ENCODE measurements at regions of chr3 and their contacts with region 1.

Region 1: DNA sequence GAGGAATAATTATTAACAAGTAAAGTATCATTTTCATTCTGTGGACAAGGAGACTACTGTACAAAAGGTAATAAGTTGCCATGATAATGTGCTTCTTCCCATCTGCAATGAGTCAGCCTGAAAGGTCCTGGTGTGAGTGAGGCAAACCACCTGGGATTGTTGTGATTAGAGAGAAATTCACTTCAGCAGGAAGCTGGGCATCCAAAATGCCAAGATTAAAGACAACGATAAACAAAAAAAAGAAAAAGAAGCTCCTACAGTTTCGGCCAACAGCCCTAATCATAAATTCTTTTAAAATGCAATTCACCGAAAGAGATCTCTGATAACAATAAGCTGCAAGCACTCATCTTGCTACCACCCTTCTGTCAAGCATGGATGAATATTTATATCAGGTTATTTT is 507.8 kb downstream of the TUSC7 start:
- DNase-seq: no peak
- ATAC-seq: no peak
- H3K4me3 Mint-ChIP-seq: no peak overlapping the region
- H3K27ac Mint-ChIP-seq: no peak overlapping the region
- H3K4me1 Mint-ChIP-seq: no peaks in the 10 kb centered on the region
- H3K27me3 Mint-ChIP-seq: no peaks in the 10 kb centered on the region

Region 2: DNA sequence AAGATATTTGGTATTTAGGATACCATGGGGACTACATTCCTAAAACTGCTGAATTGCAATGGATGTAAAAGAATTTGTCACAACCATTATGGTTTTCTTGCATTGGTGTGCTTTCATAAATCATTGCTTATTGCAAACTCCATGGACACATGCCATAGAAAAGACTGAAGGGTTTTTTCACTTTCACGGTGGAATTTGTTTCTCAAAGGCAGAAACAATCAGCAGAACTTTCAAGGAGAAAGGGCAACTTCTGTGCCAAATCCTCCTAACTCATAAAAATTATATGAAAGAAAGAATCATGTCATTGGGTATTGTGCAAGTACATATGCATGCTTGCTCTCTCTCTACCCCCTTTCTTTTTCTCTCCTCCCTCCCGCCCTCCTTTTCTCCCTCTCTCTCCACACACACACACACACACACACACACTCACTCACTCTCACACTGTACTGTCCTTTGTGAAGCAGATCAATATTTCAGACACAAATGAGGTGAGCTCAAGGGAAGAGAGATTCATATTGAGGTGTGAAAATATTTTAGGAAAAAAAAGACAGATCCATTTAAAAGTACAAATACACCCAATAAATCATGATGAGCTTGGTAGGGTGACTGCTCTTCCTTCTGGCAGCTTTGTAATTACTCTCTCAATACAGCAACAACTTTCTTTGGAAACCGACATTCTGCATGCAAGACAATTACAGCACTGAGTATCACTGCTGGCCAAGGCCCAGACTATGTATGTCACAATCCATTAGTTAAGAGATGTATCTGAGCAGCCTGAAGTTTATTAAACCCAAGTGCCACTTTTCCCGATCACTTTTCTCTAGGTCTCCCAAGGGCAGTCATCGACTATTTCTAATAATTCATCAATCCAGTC is 15.2 kb before region 1 on chr3:
- CTCF ChIA-PET with region 1: no interaction called
- POLR2A ChIA-PET with region 1: no interaction called
- intact Hi-C with region 1: no loop called
- DNase-seq: no peak
- ATAC-seq: no peak
- H3K4me3 Mint-ChIP-seq: no peak overlapping the region
- H3K27ac Mint-ChIP-seq: no peak overlapping the region
- H3K4me1 Mint-ChIP-seq: no peaks in the 10 kb centered on the region
- H3K27me3 Mint-ChIP-seq: no peaks in the 10 kb centered on the region

Region 3: DNA sequence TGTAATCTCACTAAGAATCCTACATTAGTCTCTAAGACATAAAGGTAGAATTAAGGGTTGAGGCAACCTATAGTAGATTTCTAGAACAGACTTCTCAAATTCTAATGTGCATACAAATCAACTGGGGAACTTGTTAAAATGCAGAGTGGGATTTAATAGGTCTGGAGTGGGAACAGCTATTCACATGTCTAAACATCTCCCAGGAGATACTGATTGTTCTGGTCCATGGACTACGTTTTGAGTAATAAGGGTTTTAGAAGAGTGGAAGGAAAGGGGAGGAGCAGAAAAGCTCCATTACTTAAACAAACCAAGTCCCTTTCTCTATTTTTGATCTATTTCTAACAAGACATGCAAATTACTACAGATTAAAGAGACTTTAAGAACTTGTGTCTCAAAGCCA is 17.0 kb after region 1 on chr3:
- CTCF ChIA-PET with region 1: no interaction called
- POLR2A ChIA-PET with region 1: interaction called, 11 read pairs
- intact Hi-C with region 1: no loop called
- DNase-seq: no peak
- ATAC-seq: no peak
- H3K4me3 Mint-ChIP-seq: no peak overlapping the region
- H3K27ac Mint-ChIP-seq: no peak overlapping the region
- H3K4me1 Mint-ChIP-seq: no peaks in the 10 kb centered on the region
- H3K27me3 Mint-ChIP-seq: no peaks in the 10 kb centered on the region

Region 4: GRCh38 chr3:117589454-117589853 is 372.1 kb after region 1 on chr3:
- CTCF ChIA-PET with region 1: no interaction called
- POLR2A ChIA-PET with region 1: no interaction called
- intact Hi-C with region 1: no loop called
- DNase-seq: no peak
- ATAC-seq: no peak
- H3K4me3 Mint-ChIP-seq: no peak overlapping the region
- H3K27ac Mint-ChIP-seq: no peak overlapping the region
- H3K4me1 Mint-ChIP-seq: no peaks in the 10 kb centered on the region
- H3K27me3 Mint-ChIP-seq: no peaks in the 10 kb centered on the region